B cell (primary cell): ENCODE measurements at regions of chrX and their contacts with region 1.

Region 1: DNA sequence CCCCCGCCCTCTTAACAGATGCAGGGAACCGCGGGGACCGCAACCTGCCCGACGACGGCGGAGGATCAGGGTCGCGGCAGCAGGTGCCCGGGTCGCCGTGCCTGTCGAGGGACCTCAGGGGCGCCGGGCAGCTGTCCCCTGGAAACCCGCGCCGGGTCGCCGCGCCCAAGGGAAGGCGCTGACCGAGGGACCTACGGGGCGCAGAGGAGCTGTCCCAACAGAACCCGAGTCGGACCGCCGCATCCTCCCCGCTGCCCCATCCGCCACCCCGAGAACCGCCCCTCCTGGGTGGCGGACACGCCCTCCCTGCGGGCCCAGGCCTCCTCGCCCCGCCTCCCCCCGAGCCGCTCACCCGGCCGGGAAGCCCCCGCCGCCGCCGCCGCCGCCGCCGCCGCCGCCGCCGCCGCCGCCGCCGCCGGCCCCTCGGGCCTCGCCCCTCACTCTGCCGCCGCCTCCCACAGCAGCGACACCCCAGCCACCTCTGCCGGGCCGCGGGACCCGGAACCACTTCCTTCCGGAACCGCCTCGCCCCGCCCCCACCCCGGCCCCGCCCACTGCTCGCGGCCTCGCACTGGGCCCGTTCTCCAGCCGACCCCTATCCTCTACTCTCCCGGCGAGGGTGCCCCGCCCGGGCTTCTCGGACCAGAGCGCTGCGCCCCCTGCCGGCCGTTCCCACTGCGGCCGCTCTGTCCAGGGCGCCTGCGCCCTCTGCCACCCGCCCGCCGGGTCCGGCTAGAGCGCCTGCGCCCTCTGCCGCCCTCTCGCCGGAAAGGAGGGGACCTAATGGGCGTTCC is at the start of gene BCLAF3:
- DNase-seq: peak; percentile 90
- ATAC-seq: peak; percentile 89
- H3K4me3 ChIP-seq: peak within 1 kb of the TSS; percentile 57 to 68 (median 62)
- H3K4me3 Mint-ChIP-seq: peak within 1 kb of the TSS; percentile 93
- H3K27ac ChIP-seq: peak within 1 kb of the TSS; percentile 71 to 73
- H3K27ac Mint-ChIP-seq: peak within 1 kb of the TSS; percentile 91
- H3K4me1 ChIP-seq: peaks cover 6 to 11% of the 10 kb centered on the region in 2 donors
- H3K4me1 Mint-ChIP-seq: peaks cover 20% of the 10 kb centered on the region
- H3K27me3 ChIP-seq: no peaks in the 10 kb centered on the region
- H3K27me3 Mint-ChIP-seq: no peaks in the 10 kb centered on the region
- CTCF ChIP-seq: peak; percentile 65
- total RNA-seq, gene BCLAF3: 21.1 and 21.5 TPM in 2 replicates

Region 2: DNA sequence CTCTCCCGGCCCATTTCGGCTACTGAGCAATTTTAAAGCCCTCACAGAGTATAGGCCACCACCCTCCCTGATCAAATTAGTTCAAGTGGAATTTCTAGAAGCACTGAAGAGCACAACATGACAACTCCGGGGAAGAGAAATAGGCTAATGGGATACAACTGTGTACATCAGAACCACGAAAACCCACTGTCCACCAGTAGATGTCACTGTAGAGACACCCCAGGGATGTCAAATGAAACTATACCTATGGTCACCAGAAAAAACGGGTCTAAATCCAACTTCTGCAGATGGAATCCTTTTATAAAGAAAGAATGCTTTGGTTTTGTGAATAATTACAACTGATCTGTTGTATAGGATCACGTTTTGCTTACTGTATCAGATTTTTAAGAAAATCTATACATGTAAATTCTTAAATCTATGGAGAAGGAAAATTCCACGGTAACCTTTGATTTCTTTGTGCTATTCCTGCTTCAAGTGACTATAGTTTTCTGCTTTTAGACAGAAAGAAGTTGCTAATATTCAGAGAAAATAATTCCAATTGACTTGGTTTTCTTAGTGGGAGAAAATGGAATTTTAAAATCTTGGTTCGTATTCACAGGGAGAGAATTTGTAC is 446.0 kb before region 1 on chrX:
- CTCF ChIA-PET with region 1: no interaction called
- POLR2A ChIA-PET with region 1: no interaction called
- intact Hi-C with region 1: loop called (anchors 1 kb)
- DNase-seq: peak; percentile 46
- ATAC-seq: peak; percentile 33
- H3K4me3 ChIP-seq: no peak overlapping the region
- H3K4me3 Mint-ChIP-seq: no peak overlapping the region
- H3K27ac ChIP-seq: no peak overlapping the region
- H3K27ac Mint-ChIP-seq: no peak overlapping the region
- H3K4me1 ChIP-seq: no peaks in the 10 kb centered on the region
- H3K4me1 Mint-ChIP-seq: peaks cover 1% of the 10 kb centered on the region
- H3K27me3 ChIP-seq: no peaks in the 10 kb centered on the region
- H3K27me3 Mint-ChIP-seq: no peaks in the 10 kb centered on the region
- CTCF ChIP-seq: peak; percentile 73

Region 3: GRCh38 chrX:19739683-19740082 is 251.1 kb before region 1 on chrX:
- CTCF ChIA-PET with region 1: no interaction called
- POLR2A ChIA-PET with region 1: no interaction called
- intact Hi-C with region 1: loop called (anchors 1 kb)
- DNase-seq: peak; percentile 65
- ATAC-seq: peak; percentile 49
- H3K4me3 ChIP-seq: no peak overlapping the region
- H3K4me3 Mint-ChIP-seq: no peak overlapping the region
- H3K27ac ChIP-seq: no peak overlapping the region
- H3K27ac Mint-ChIP-seq: peak overlapping the region; percentile 73
- H3K4me1 ChIP-seq: peaks cover 12 to 17% of the 10 kb centered on the region in 2 donors
- H3K4me1 Mint-ChIP-seq: peaks cover 45% of the 10 kb centered on the region
- H3K27me3 ChIP-seq: no peaks in the 10 kb centered on the region
- H3K27me3 Mint-ChIP-seq: no peaks in the 10 kb centered on the region
- CTCF ChIP-seq: peak; percentile 74

Region 4: DNA sequence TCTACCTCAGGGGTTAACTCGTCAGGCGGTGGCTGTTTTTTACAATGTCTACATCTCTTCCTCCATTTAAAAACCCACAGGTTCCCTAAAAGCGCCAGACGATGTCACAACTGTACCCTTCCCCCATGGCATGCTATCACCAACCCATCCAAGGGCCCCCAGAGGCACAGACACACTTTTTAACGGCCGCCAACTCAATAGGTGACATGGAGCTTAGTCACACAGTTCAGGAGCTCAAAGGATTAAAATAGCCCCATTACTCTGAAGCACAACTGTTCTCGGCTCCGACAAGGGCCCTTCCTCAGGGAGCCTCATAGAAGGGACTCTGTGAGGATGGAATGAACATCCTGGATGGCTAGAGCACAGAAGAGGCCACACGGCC is 115.7 kb before region 1 on chrX:
- CTCF ChIA-PET with region 1: no interaction called
- POLR2A ChIA-PET with region 1: no interaction called
- intact Hi-C with region 1: no loop called
- DNase-seq: peak; percentile 76
- ATAC-seq: peak; percentile 80
- H3K4me3 ChIP-seq: peak overlapping the region in 4 of 5 experiments; percentile 30 to 39 (median 32)
- H3K4me3 Mint-ChIP-seq: peak overlapping the region; percentile 74
- H3K27ac ChIP-seq: peak overlapping the region; percentile 26 to 83
- H3K27ac Mint-ChIP-seq: peak overlapping the region; percentile 90
- H3K4me1 ChIP-seq: peaks cover 68 to 75% of the 10 kb centered on the region in 2 donors
- H3K4me1 Mint-ChIP-seq: peaks cover 72% of the 10 kb centered on the region
- H3K27me3 ChIP-seq: no peaks in the 10 kb centered on the region
- H3K27me3 Mint-ChIP-seq: no peaks in the 10 kb centered on the region
- CTCF ChIP-seq: no peak

Region 5: GRCh38 chrX:20060961-20061748 is 70.4 kb after region 1 on chrX:
- CTCF ChIA-PET with region 1: interaction called, 5 read pairs
- POLR2A ChIA-PET with region 1: no interaction called
- intact Hi-C with region 1: loop called (anchors 1 kb)
- DNase-seq: peak; percentile 89
- ATAC-seq: peak; percentile 97
- H3K4me3 ChIP-seq: no peak overlapping the region
- H3K4me3 Mint-ChIP-seq: peak overlapping the region; percentile 56
- H3K27ac ChIP-seq: peak overlapping the region; percentile 64 to 71
- H3K27ac Mint-ChIP-seq: peak overlapping the region; percentile 86
- H3K4me1 ChIP-seq: peaks cover 21 to 27% of the 10 kb centered on the region in 2 donors
- H3K4me1 Mint-ChIP-seq: peaks cover 30% of the 10 kb centered on the region
- H3K27me3 ChIP-seq: no peaks in the 10 kb centered on the region
- H3K27me3 Mint-ChIP-seq: no peaks in the 10 kb centered on the region
- CTCF ChIP-seq: no peak